Aorta (tissue), 5 donors: ENCODE measurements at regions of chr3 and their contacts with region 1.

Region 1: DNA sequence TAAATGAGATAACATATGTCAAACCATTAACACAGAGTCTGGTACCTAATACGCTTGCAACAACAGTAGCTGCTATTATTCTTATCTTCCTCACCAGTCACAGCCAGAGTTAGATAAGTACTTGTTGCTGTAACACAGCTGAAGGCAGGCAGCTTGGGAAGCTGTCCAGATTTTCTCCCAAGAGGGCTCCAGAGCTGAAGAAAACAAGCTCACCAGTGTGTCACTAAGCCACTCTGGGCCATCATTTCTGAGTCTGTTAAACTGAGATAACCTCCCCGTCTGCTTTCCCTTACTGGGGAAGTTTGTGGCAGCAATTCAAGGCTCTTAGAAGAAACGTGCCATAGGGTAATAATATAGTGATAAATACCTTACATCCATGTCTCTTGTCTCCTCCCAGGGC is 226.3 kb downstream of the TAFA4 start:
- DNase-seq: peak; percentile 72 to 74
- ATAC-seq: peak; percentile 75
- H3K4me3 ChIP-seq: no peak overlapping the region
- H3K27ac ChIP-seq: peak overlapping the region in 1 of 2 donors; percentile 43
- H3K4me1 ChIP-seq: peaks cover 0 to 7% of the 10 kb centered on the region in 2 donors
- H3K27me3 ChIP-seq: no peaks in the 10 kb centered on the region

Region 2: GRCh38 chr3:66998113-66998903 is 1707.8 kb before region 1 on chr3 and contains the start of gene KBTBD8:
- intact Hi-C with region 1: loop called in 1 of 2 experiments (anchors 10 kb)
- DNase-seq: peak; percentile 98 to 99
- ATAC-seq: peak; percentile 100
- H3K4me3 ChIP-seq: peak within 1 kb of the TSS; percentile 55 to 79
- H3K27ac ChIP-seq: peak within 1 kb of the TSS in 1 of 2 donors; percentile 15
- H3K4me1 ChIP-seq: no peaks in the 10 kb centered on the region
- H3K27me3 ChIP-seq: no peaks in the 10 kb centered on the region
- total RNA-seq, gene KBTBD8: 1.2 to 3.1 TPM

Region 3: GRCh38 chr3:68666429-68667136 is 39.5 kb before region 1 on chr3:
- intact Hi-C with region 1: loop called in 1 of 2 experiments (anchors 10 kb)
- DNase-seq: no peak
- ATAC-seq: no peak
- H3K4me3 ChIP-seq: no peak overlapping the region
- H3K27ac ChIP-seq: peak overlapping the region in 1 of 2 donors; percentile 12
- H3K4me1 ChIP-seq: peaks cover 4 to 7% of the 10 kb centered on the region in 2 donors
- H3K27me3 ChIP-seq: no peaks in the 10 kb centered on the region